ENCODE measurements at regions of chr11 and their contacts with region 1.

Region 1: DNA sequence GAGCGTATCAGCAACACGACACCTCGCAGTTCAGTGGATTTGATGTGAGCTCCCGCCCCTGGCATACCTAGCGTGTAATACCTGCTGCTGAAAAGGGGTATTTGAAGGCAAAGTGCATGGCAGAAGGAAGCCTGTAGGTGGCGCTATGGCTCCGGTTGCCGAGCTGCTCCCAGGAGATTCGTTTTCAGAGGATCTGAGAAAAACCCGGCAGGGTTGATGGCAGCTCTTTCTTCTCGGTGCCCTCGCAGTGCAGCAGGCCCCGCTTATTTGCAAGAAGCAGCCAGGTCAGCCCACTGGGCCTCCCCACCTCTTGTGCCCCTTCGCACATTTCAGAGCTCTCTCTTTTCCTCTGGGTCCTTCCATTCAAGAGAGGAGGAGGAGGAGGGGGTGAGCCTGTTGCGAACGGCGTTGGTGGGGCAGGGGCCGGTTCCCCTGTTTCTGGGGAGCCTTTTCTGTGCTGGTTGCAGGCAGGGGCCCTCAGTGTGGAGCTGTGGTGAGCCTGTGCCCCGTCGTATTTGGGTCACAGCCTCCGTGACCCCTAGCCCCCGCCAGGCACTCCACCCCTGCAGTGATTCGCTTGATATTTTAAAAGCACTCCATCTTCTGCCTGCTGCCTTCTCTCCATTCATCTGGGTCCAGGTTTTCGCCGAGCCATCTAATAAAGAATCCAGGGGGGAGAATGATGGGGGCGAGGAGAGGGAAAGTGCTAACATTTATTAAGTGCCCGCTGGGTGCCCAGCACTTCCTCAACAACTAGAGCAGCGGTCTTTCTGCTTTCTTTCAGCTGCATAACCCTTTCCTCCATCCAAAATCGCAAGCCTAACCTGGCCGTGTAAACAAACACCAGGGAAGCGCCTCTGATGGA is 85.3 kb upstream of the SYT13 start:
- H3K4me3 Mint-ChIP-seq: no peak overlapping the region
- H3K27ac Mint-ChIP-seq: no peak overlapping the region
- H3K4me1 Mint-ChIP-seq: no peaks in the 10 kb centered on the region
- H3K27me3 Mint-ChIP-seq: peaks cover 72% of the 10 kb centered on the region

Region 2: DNA sequence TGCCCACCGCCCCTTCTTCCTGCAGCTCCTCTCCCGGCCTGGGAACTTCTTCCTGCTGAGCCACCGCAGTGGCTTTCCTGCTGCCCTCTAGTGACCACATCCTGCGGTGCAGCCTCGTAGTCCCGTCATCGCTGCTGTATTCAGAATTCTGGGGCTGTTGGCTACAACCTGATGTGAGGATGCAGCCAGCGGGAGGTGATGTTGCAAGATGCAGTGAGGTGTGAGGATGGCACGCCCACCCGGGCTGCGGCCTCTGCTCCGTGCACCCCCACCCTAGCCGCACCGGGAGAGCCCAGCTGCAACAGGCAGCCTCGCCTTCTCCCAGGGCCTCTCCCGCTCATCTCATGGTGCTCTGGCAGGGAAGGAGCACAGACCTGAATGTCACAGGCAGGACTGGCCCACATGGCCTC is 283.9 kb after region 1 on chr11:
- intact Hi-C with region 1: loop called (anchors 1 kb)
- H3K4me3 Mint-ChIP-seq: no peak overlapping the region
- H3K27ac Mint-ChIP-seq: no peak overlapping the region
- H3K4me1 Mint-ChIP-seq: peaks cover 7% of the 10 kb centered on the region
- H3K27me3 Mint-ChIP-seq: peaks cover 71% of the 10 kb centered on the region

Region 3: GRCh38 chr11:45771566-45772448 is 400.3 kb after region 1 on chr11:
- intact Hi-C with region 1: loop called (anchors 10 kb)
- H3K4me3 Mint-ChIP-seq: peak overlapping the region; percentile 86
- H3K27ac Mint-ChIP-seq: peak overlapping the region; percentile 72
- H3K4me1 Mint-ChIP-seq: peaks cover 15% of the 10 kb centered on the region
- H3K27me3 Mint-ChIP-seq: peaks cover 22% of the 10 kb centered on the region

Measured in dendritic cell treated with granulocyte-macrophage colony-stimulating factor and Interleukin-4, amounts not matched to agents 40 ng/mL and 50 ng/mL, for 4 days (primary cell).